A549 (cell line): ENCODE measurements at regions of chr5 and their contacts with region 1.

Region 1: DNA sequence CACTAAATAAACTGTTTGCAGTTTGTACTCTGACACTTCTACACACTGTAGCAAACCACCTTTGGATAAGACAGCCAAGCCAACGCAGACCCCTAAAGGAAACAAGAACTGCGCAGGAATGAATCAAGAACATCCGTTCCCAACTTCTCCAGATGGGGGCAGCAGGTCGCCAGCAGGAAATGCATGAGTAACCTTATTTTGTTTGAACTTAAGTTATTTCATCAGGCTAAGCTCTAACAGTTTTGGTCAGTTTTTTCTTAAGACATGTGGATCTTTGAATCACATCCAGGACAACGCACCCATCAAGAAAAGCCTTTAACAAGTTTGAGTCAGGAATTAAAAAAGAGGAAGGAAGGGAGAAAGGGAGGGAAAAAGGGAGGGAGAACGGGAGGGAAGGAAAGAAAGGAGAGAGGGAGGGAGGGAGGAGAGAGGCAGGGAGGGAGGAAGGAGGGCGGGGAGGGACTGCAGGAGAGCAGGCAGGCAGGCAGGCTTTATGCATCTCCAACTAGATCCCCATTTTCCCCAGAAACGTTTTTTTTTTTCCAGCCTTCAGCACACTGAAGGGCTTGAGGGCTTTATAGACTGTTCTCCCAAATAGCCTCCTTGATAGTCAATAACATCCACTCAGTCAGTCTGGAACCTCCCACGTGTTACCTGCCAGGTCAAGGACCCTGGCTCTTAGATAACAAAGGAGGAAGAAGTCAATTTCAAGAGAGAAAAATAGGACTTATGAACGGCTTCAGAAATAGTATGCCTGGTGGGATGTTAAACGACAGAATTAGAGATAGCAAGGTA is 22.2 kb downstream of the BHMT start:
- DNase-seq: peak; percentile 41 to 83
- ATAC-seq: peak; percentile 94 to 95
- H3K4me3 ChIP-seq: peak overlapping the region; percentile 33
- H3K27ac ChIP-seq: peak overlapping the region; percentile 75 to 84
- H3K4me1 ChIP-seq: peaks cover 4% of the 10 kb centered on the region; the same call in 2 of the 3 replicates
- CTCF ChIP-seq: peak; percentile 71
- EP300 ChIP-seq: no peak
- POLR2A ChIP-seq: no peak
- RAD21 ChIP-seq: peak; percentile 81 to 84

Region 2: GRCh38 chr5:79030663-79031484 is 103.0 kb before region 1 on chr5:
- CTCF ChIA-PET with region 1: interaction called, 354 read pairs
- POLR2A ChIA-PET with region 1: no interaction called
- DNase-seq: no peak
- ATAC-seq: no peak
- H3K4me3 ChIP-seq: no peak overlapping the region
- H3K27ac ChIP-seq: no peak overlapping the region
- H3K4me1 ChIP-seq: no peaks in the 10 kb centered on the region
- CTCF ChIP-seq: no peak
- EP300 ChIP-seq: no peak
- POLR2A ChIP-seq: no peak
- RAD21 ChIP-seq: no peak

Region 3: GRCh38 chr5:79120216-79120615 is 13.6 kb before region 1 on chr5:
- CTCF ChIA-PET with region 1: interaction called, 25 read pairs
- POLR2A ChIA-PET with region 1: no interaction called
- DNase-seq: no peak
- ATAC-seq: no peak
- H3K4me3 ChIP-seq: no peak overlapping the region
- H3K27ac ChIP-seq: no peak overlapping the region
- H3K4me1 ChIP-seq: peaks cover 17% of the 10 kb centered on the region; the same call in 2 of the 3 replicates
- CTCF ChIP-seq: no peak
- EP300 ChIP-seq: no peak
- POLR2A ChIP-seq: no peak
- RAD21 ChIP-seq: no peak

Region 4: GRCh38 chr5:79157305-79157704 is 23.5 kb after region 1 on chr5:
- CTCF ChIA-PET with region 1: interaction called, 13 read pairs
- POLR2A ChIA-PET with region 1: no interaction called
- DNase-seq: no peak
- ATAC-seq: no peak
- H3K4me3 ChIP-seq: no peak overlapping the region
- H3K27ac ChIP-seq: no peak overlapping the region
- H3K4me1 ChIP-seq: no peaks in the 10 kb centered on the region
- CTCF ChIP-seq: no peak
- EP300 ChIP-seq: no peak
- POLR2A ChIP-seq: no peak
- RAD21 ChIP-seq: no peak

Region 5: GRCh38 chr5:79464695-79465332 is 331.0 kb after region 1 on chr5:
- CTCF ChIA-PET with region 1: interaction called, 96 read pairs
- POLR2A ChIA-PET with region 1: no interaction called
- DNase-seq: peak; percentile 21 to 44
- ATAC-seq: peak; percentile 68 to 73; a peak in 4 of 6 replicates
- H3K4me3 ChIP-seq: no peak overlapping the region
- H3K27ac ChIP-seq: no peak overlapping the region
- H3K4me1 ChIP-seq: no peaks in the 10 kb centered on the region
- CTCF ChIP-seq: peak; percentile 72
- EP300 ChIP-seq: no peak
- POLR2A ChIP-seq: no peak
- RAD21 ChIP-seq: peak; percentile 78 to 79